Astrocyte of the cerebellum (primary cell): ENCODE measurements at regions of chr1 and their contacts with region 1.

Region 1: DNA sequence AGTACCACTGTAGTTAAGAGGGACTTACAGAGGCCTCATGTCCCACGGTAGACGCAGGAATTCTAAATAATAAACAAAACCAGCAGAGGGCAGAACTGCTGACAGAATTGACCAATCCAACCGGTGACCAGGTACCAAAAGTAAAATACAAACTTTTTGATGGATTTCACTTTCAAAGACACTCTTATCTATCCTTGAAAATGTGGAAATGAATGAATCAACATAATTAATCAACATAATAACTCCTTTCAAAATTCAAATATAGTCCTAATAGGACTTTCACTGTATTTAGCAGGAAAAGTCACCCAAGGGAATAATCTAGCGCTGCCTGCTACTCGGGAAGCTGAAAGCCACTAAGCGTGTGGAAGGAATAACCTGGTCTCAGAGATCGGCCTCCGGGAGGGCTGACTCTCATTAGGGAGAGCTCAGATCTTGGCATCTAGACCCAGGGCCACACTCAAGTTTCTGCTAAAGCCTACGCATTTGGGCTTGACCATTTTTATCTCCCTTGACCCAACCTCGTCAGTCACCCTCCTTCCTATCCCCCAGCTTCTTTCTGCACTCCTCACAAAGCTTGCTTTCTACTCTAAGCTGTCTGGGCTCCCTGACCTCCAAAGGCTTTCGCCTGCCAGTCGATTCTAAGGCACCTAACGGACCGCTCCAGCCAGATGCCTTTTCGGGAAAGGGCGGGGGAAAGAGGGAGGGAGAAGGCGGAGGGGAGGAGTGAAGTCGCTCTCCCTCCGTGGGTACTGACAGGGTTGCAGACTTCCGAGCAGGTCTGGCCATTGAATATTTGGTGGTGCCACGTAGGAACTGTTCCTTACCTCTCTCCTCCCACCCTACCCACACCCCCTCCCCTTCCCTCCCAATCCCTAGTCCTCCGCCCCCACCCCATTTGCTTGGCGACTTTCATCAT is 1.6 kb downstream of the COL11A1 start:
- DNase-seq: peak; percentile 49
- H3K4me3 ChIP-seq: peak overlapping the region; percentile 67
- CTCF ChIP-seq: peak; percentile 63

Region 2: GRCh38 chr1:102901996-102902395 is 204.7 kb before region 1 on chr1:
- in situ Hi-C with region 1: no loop called
- DNase-seq: no peak
- H3K4me3 ChIP-seq: no peak overlapping the region
- CTCF ChIP-seq: no peak

Region 3: GRCh38 chr1:103156966-103157365 is 50.3 kb after region 1 on chr1:
- in situ Hi-C with region 1: loop called (anchors 5 kb)
- DNase-seq: peak; percentile 78
- H3K4me3 ChIP-seq: no peak overlapping the region
- CTCF ChIP-seq: no peak

Region 4: DNA sequence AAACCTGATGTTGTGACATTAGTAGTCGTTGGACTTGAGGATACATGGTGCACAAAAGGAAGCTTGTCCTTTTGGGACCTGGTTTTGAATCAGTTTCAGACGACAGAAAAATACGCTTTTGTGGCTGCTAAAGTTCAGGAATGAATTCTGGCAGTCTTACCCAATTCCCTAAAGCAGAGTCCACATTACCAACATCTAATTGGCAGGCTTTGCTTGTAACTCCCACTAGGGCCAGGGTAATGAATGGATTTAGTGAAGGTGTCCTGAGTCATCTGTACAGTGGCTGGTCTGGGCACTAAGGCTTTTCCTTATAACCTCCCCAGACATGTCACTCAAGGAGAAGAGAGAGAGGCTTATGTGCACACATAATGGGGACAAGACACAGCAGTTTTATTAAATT is 352.7 kb after region 1 on chr1:
- in situ Hi-C with region 1: loop called (anchors 5 kb)
- DNase-seq: no peak
- H3K4me3 ChIP-seq: no peak overlapping the region
- CTCF ChIP-seq: no peak